ENCODE measurements at regions of chr18 and their contacts with region 1.

Region 1: GRCh38 chr18:74652392-74652988 is 54.8 kb downstream of the ZNF407 start:
- DNase-seq: no peak

Region 2: GRCh38 chr18:74963820-74964446 is 311.4 kb after region 1 on chr18:
- intact Hi-C with region 1: loop called (anchors 5 kb)
- DNase-seq: peak in 1 of 10 donors; percentile 37

Region 3: GRCh38 chr18:75036917-75037688 is 384.6 kb after region 1 on chr18:
- intact Hi-C with region 1: loop called (anchors 10 kb)
- DNase-seq: no peak

Region 4: GRCh38 chr18:75478996-75479880 is 826.7 kb after region 1 on chr18:
- intact Hi-C with region 1: loop called (anchors 1 kb)
- DNase-seq: no peak

Region 5: DNA sequence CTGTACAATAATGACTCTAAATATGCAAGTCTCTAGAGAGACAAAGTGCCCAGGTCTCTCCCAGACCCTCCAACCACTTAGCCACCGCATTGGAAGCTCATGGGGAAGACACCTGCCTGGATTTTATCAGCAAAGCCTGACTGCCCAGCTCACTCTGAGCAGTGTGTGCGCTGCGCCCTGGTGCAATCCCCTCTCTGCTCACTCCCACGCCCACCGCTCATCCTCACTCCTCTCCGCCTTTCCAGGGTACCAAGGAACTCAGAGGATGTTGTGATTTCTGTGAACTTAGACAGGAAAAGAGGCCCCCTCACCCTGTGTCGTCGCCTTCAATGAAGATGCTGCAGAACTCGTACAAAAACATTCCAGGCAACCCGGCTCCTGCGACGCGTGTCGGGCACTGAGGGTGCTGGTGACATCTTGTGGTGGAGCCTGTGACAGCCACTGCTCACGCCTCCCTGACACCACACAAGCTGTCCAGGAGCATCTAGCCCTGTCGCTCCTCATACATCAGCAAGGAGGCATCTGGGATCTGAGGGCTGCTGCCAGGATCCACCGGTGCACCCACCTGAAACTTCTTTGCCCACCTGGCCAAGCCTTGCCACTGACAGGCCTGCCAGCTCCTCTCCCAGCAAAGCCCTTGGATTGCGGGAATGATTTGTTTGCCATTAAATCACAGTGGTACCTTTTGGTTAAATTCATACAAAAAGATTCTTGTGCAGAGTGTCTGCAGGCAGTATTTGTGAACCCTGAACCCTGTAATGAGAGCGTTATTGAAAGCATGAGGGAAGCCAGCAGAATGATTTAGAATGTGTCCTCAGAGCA is 1622.2 kb after region 1 on chr18:
- intact Hi-C with region 1: loop called (anchors 10 kb)
- DNase-seq: peak; percentile 43 to 96 (median 70)

Region 6: GRCh38 chr18:76349067-76349715 is 1696.7 kb after region 1 on chr18:
- intact Hi-C with region 1: loop called (anchors 2 kb)
- DNase-seq: peak in 8 of 10 donors; percentile 42 to 92 (median 72)